Esophagus muscularis mucosa (tissue), 4 donors: ENCODE measurements at regions of chr9 and their contacts with region 1.

Region 1: GRCh38 chr9:105716146-105716545 is 21.8 kb downstream of the TMEM38B start:
- DNase-seq: no peak
- H3K4me3 ChIP-seq: no peak overlapping the region
- H3K27ac ChIP-seq: no peak overlapping the region
- H3K4me1 ChIP-seq: no peaks in the 10 kb centered on the region
- H3K27me3 ChIP-seq: no peaks in the 10 kb centered on the region
- CTCF ChIP-seq: no peak
- EP300 ChIP-seq: no peak
- POLR2A ChIP-seq: no peak

Region 2: GRCh38 chr9:105608721-105609598 is 107.2 kb before region 1 on chr9:
- intact Hi-C with region 1: loop called (anchors 5 kb)
- DNase-seq: no peak
- H3K4me3 ChIP-seq: no peak overlapping the region
- H3K27ac ChIP-seq: no peak overlapping the region
- H3K4me1 ChIP-seq: no peaks in the 10 kb centered on the region
- H3K27me3 ChIP-seq: no peaks in the 10 kb centered on the region
- CTCF ChIP-seq: peak; percentile 45 to 60 (median 54)
- EP300 ChIP-seq: no peak
- POLR2A ChIP-seq: no peak

Region 3: GRCh38 chr9:105994970-105995369 is 278.8 kb after region 1 on chr9:
- intact Hi-C with region 1: no loop called
- DNase-seq: no peak
- H3K4me3 ChIP-seq: no peak overlapping the region
- H3K27ac ChIP-seq: no peak overlapping the region
- H3K4me1 ChIP-seq: no peaks in the 10 kb centered on the region
- H3K27me3 ChIP-seq: no peaks in the 10 kb centered on the region
- CTCF ChIP-seq: no peak
- EP300 ChIP-seq: no peak
- POLR2A ChIP-seq: no peak

Region 4: DNA sequence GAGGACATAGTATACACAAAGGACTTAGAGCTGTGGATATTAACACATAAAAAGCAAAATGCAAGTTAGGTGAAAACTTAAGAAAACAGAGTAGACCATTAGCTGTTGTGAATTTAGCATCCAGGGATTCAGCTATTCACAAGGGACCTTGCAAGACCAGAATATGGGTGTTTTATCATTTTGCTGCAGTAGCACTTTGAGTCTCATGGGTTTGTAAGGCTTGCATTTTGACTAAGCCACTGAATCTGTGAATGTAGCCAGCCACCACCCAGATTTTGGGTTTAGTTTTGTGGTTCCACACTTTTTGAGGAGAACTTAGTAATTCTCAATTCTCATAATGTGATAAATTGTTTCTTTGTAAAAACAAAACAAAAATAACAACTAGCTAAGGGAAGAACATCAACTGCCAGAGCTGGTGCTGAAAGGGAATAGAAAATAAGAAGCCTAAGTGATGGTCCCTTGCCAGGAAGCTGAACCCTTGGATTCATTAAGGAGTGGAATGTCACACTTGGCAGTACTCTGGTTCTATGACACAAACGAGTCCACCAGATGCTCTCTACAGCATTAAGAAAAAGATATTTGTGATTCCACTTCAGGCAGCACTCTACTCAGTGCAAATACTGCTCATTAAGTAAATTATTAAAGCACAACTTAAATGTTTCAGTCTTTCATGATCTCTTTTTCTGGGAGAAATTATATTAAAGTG is 589.4 kb after region 1 on chr9:
- intact Hi-C with region 1: no loop called
- DNase-seq: no peak
- H3K4me3 ChIP-seq: no peak overlapping the region
- H3K27ac ChIP-seq: no peak overlapping the region
- H3K4me1 ChIP-seq: peaks cover 0 to 5% (median 0%) of the 10 kb centered on the region in 4 donors
- H3K27me3 ChIP-seq: no peaks in the 10 kb centered on the region
- CTCF ChIP-seq: no peak
- EP300 ChIP-seq: no peak
- POLR2A ChIP-seq: no peak